Activated CD8-positive, alpha-beta T cell treated with anti-CD3 and anti-CD28 coated beads for 36 hours (primary cell): ENCODE measurements at regions of chr2 and their contacts with region 1.

Region 1: GRCh38 chr2:135948642-135949355 is 36.6 kb downstream of the DARS1 start:
- DNase-seq: peak; percentile 49
- ATAC-seq: peak; percentile 73
- H3K4me3 Mint-ChIP-seq: peak overlapping the region; percentile 27
- H3K27ac Mint-ChIP-seq: peak overlapping the region; percentile 88
- H3K4me1 Mint-ChIP-seq: peaks cover 61% of the 10 kb centered on the region
- H3K27me3 Mint-ChIP-seq: no peaks in the 10 kb centered on the region
- CTCF ChIP-seq: no peak

Region 2: DNA sequence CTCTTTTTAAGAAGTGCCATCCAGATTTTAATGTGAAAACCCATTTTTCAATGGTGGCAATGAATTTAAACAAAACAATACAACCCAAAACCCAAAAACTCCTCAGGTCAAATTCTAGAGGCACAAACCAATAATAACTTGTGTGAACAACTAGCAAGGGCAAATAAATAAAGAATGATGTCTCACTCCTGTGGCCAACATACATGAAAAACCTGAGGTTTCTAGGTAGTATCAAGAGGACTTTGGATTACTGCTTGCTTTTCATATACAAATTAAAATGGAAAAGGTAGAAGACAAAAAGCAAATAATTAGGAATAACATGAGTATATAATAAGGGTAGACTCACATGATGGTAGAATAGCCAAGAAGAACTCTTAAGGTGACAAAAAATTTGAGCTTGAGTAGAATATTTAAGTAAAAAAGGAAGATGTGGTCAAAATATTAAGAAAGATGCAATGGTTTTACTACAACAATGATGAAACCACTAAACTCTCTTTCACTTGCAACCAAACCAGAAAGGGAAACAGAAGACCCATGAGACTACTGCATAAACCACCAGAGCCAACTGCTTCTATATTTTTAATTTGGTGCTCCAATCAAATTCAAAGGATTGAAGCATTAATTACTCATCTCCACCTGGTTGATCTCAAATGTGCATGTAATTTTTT is 16.9 kb before region 1 on chr2:
- CTCF ChIA-PET with region 1: interaction called, 11 read pairs
- POLR2A ChIA-PET with region 1: no interaction called
- intact Hi-C with region 1: no loop called
- DNase-seq: no peak
- ATAC-seq: peak; percentile 30
- H3K4me3 Mint-ChIP-seq: no peak overlapping the region
- H3K27ac Mint-ChIP-seq: peak overlapping the region; percentile 59
- H3K4me1 Mint-ChIP-seq: peaks cover 29% of the 10 kb centered on the region
- H3K27me3 Mint-ChIP-seq: no peaks in the 10 kb centered on the region
- CTCF ChIP-seq: no peak

Region 3: GRCh38 chr2:135985018-135985825 is 36.4 kb after region 1 on chr2 and contains the start of gene DARS1:
- CTCF ChIA-PET with region 1: no interaction called
- POLR2A ChIA-PET with region 1: interaction called, 3 read pairs
- intact Hi-C with region 1: loop called (anchors 5 kb)
- DNase-seq: peak; percentile 93
- ATAC-seq: peak; percentile 85
- H3K4me3 Mint-ChIP-seq: peak within 1 kb of the TSS; percentile 90
- H3K27ac Mint-ChIP-seq: peak within 1 kb of the TSS; percentile 97
- H3K4me1 Mint-ChIP-seq: peaks cover 45% of the 10 kb centered on the region
- H3K27me3 Mint-ChIP-seq: no peaks in the 10 kb centered on the region
- CTCF ChIP-seq: no peak
- total RNA-seq, gene DARS1: 210 to 211 TPM